ENCODE measurements at regions of chr4 and their contacts with region 1.

Region 1: DNA sequence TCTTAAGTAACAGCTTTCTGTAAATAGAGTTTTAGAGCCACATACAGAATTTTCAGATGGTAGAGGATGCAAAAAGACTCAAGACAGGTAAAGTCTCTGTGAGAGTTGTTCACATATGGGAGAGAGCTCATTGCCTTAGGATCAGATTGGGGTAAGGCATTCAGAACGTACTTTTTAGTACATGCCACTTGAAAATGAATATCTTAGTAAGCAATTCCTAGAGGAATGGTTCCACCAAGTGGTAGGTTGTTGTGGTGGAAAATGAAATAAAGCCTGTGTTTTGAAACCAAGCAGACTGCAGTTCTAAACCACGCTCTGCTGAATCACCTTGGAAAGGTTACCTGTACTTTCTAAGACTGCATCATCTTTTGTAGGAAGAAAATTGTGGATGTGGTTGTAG is 547.0 kb upstream of the LCORL start:
- DNase-seq: no peak
- H3K4me3 ChIP-seq: no peak overlapping the region
- H3K4me3 Mint-ChIP-seq: no peak overlapping the region
- H3K27ac Mint-ChIP-seq: no peak overlapping the region
- H3K4me1 ChIP-seq: peaks cover 20% of the 10 kb centered on the region
- H3K4me1 Mint-ChIP-seq: peaks cover 15% of the 10 kb centered on the region
- H3K27me3 ChIP-seq: no peaks in the 10 kb centered on the region
- H3K27me3 Mint-ChIP-seq: no peaks in the 10 kb centered on the region
- CTCF ChIP-seq: no peak

Region 2: DNA sequence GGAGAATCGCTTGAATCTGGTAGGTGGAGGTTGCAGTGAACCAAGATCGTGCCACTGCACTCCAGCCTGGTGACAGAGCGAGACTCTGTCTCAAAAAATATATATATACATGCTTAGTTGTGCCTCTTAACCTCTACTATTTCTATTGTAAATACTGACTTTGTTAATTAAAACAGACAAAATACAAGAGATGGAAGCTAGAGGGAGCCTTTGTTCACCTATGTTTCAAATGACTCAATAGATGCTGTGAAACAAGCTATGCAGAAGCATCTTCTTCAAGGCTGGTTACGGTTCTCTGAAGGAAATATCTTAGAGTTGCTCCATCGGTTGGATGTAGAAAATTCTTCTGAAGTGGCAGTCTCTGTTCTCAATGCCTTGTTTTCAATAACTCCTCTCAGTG is 751.6 kb before region 1 on chr4:
- CTCF ChIA-PET with region 1: no interaction called
- POLR2A ChIA-PET with region 1: no interaction called
- intact Hi-C with region 1: loop called (anchors 5 kb)
- DNase-seq: peak in 1 of 2 experiments; percentile 18
- H3K4me3 ChIP-seq: no peak overlapping the region
- H3K4me3 Mint-ChIP-seq: no peak overlapping the region
- H3K27ac Mint-ChIP-seq: no peak overlapping the region
- H3K4me1 ChIP-seq: peaks cover 5% of the 10 kb centered on the region; the same call in 1 of the 2 replicates
- H3K4me1 Mint-ChIP-seq: peaks cover 4% of the 10 kb centered on the region
- H3K27me3 ChIP-seq: no peaks in the 10 kb centered on the region
- H3K27me3 Mint-ChIP-seq: no peaks in the 10 kb centered on the region
- CTCF ChIP-seq: peak; percentile 17 to 38

Measured in Caco-2 (cell line).